GM12878 (cell line): ENCODE measurements at regions of chr6 and their contacts with region 1.

Region 1: GRCh38 chr6:100116411-100117194 is 122.6 kb upstream of the MCHR2 start:
- DNase-seq: no peak
- ATAC-seq: peak; percentile 91
- H3K4me3 ChIP-seq: no peak overlapping the region
- H3K27ac ChIP-seq: no peak overlapping the region
- H3K4me1 ChIP-seq: no peaks in the 10 kb centered on the region
- H3K27me3 ChIP-seq: no peaks in the 10 kb centered on the region
- CTCF ChIP-seq: peak; percentile 59 to 73 (median 63)
- EP300 ChIP-seq: no peak
- POLR2A ChIP-seq: no peak
- RAD21 ChIP-seq: peak; percentile 86

Region 2: GRCh38 chr6:100105138-100105753 is 11.4 kb before region 1 on chr6:
- CTCF ChIA-PET with region 1: interaction called, 24 read pairs
- POLR2A ChIA-PET with region 1: no interaction called
- RAD21 ChIA-PET with region 1: interaction called, 13 read pairs
- SMC1A ChIA-PET with region 1: interaction called, 10 read pairs
- in situ Hi-C with region 1: no loop called
- intact Hi-C with region 1: no loop called
- DNase-seq: no peak
- ATAC-seq: peak; percentile 61
- H3K4me3 ChIP-seq: no peak overlapping the region
- H3K27ac ChIP-seq: no peak overlapping the region
- H3K4me1 ChIP-seq: no peaks in the 10 kb centered on the region
- H3K27me3 ChIP-seq: no peaks in the 10 kb centered on the region; a peak in 1 of 4 replicates
- CTCF ChIP-seq: no peak
- EP300 ChIP-seq: peak in 1 of 2 experiments; percentile 23; a peak in 1 of 4 replicates
- POLR2A ChIP-seq: no peak
- RAD21 ChIP-seq: no peak

Region 3: GRCh38 chr6:100176311-100176950 is 59.8 kb after region 1 on chr6:
- CTCF ChIA-PET with region 1: interaction called, 10 read pairs
- POLR2A ChIA-PET with region 1: no interaction called
- RAD21 ChIA-PET with region 1: no interaction called
- SMC1A ChIA-PET with region 1: interaction called, 12 read pairs
- in situ Hi-C with region 1: no loop called
- intact Hi-C with region 1: no loop called
- DNase-seq: no peak
- ATAC-seq: peak; percentile 49
- H3K4me3 ChIP-seq: no peak overlapping the region
- H3K27ac ChIP-seq: no peak overlapping the region
- H3K4me1 ChIP-seq: no peaks in the 10 kb centered on the region
- H3K27me3 ChIP-seq: no peaks in the 10 kb centered on the region
- CTCF ChIP-seq: peak in 2 of 3 experiments; percentile 23 to 29; a peak in 1 of 6 replicates
- EP300 ChIP-seq: no peak
- POLR2A ChIP-seq: no peak
- RAD21 ChIP-seq: peak; percentile 29; the same call in 1 of the 2 replicates

Region 4: GRCh38 chr6:100460650-100461204 is 344.1 kb after region 1 on chr6:
- CTCF ChIA-PET with region 1: interaction called, 10 read pairs
- POLR2A ChIA-PET with region 1: no interaction called
- RAD21 ChIA-PET with region 1: interaction called, 4 read pairs
- SMC1A ChIA-PET with region 1: interaction called, 7 read pairs
- in situ Hi-C with region 1: no loop called
- intact Hi-C with region 1: no loop called
- DNase-seq: no peak
- ATAC-seq: peak; percentile 35; the same call in 2 of the 3 replicates
- H3K4me3 ChIP-seq: no peak overlapping the region
- H3K27ac ChIP-seq: no peak overlapping the region
- H3K4me1 ChIP-seq: no peaks in the 10 kb centered on the region
- H3K27me3 ChIP-seq: peaks cover 26 to 61% of the 10 kb centered on the region in 2 experiments
- CTCF ChIP-seq: peak; percentile 17 to 39 (median 25); a peak in 5 of 6 replicates
- EP300 ChIP-seq: no peak
- POLR2A ChIP-seq: no peak
- RAD21 ChIP-seq: 0 out of 2 replicates have a peak, but pooled peaks have one; percentile 12

Region 5: GRCh38 chr6:100479179-100480035 is 362.8 kb after region 1 on chr6:
- CTCF ChIA-PET with region 1: interaction called, 72 read pairs
- POLR2A ChIA-PET with region 1: no interaction called
- RAD21 ChIA-PET with region 1: interaction called, 22 read pairs
- SMC1A ChIA-PET with region 1: interaction called, 38 read pairs
- in situ Hi-C with region 1: loop called (anchors 5 kb)
- intact Hi-C with region 1: loop called (anchors 1 kb)
- DNase-seq: peak; percentile 34
- ATAC-seq: peak; percentile 73
- H3K4me3 ChIP-seq: no peak overlapping the region
- H3K27ac ChIP-seq: no peak overlapping the region
- H3K4me1 ChIP-seq: peaks cover 7% of the 10 kb centered on the region
- H3K27me3 ChIP-seq: no peaks in the 10 kb centered on the region
- CTCF ChIP-seq: peak; percentile 63 to 80 (median 76)
- EP300 ChIP-seq: no peak
- POLR2A ChIP-seq: no peak
- RAD21 ChIP-seq: peak; percentile 95

Region 6: GRCh38 chr6:100573167-100573566 is 456.6 kb after region 1 on chr6:
- CTCF ChIA-PET with region 1: interaction called, 3 read pairs
- POLR2A ChIA-PET with region 1: no interaction called
- RAD21 ChIA-PET with region 1: interaction called, 3 read pairs
- SMC1A ChIA-PET with region 1: interaction called, 3 read pairs
- in situ Hi-C with region 1: no loop called
- intact Hi-C with region 1: loop called (anchors 5 kb)
- DNase-seq: no peak
- ATAC-seq: peak; percentile 37; the same call in 1 of the 3 replicates
- H3K4me3 ChIP-seq: no peak overlapping the region
- H3K27ac ChIP-seq: no peak overlapping the region
- H3K4me1 ChIP-seq: no peaks in the 10 kb centered on the region
- H3K27me3 ChIP-seq: no peaks in the 10 kb centered on the region
- CTCF ChIP-seq: peak in 2 of 3 experiments; percentile 10 to 19; a peak in 2 of 6 replicates
- EP300 ChIP-seq: no peak
- POLR2A ChIP-seq: no peak
- RAD21 ChIP-seq: no peak

Region 7: DNA sequence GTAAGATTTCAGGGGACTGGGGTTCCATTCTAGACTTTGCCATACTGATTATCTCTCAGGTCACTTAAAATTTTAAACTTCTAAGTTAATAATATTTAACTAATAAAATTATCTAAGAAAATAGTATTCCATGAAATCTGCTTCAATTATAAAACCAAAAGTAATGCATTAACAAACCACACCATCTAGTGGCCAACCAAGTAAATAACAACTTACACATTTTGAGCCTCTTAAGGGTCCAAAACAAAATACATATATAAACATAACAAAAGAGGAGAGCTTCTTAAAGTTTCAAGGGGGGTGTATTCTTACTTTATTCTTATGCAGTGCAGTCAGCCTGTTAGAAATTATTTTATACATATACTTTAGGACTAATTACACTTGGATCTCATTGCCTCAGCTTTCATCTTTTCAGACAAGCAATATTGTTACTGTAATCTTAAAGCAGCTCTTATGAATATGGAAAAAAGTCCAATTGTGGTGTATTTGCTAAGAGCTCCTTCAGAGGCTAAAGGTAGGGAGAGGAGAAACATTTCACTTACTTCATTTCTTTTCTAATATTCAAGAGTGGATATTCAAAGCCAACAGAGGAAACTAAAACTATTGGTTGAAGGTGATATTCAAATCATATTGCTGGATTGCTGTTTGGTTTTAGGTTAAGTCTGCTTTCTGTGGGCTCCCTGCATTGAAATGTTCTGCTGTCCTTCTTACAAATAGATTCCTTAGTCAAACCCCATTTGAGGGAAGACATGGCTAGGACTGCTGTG is 547.9 kb after region 1 on chr6:
- CTCF ChIA-PET with region 1: interaction called, 20 read pairs
- POLR2A ChIA-PET with region 1: no interaction called
- RAD21 ChIA-PET with region 1: interaction called, 15 read pairs
- SMC1A ChIA-PET with region 1: interaction called, 21 read pairs
- in situ Hi-C with region 1: loop called (anchors 10 kb)
- intact Hi-C with region 1: no loop called
- DNase-seq: no peak
- ATAC-seq: peak; percentile 65
- H3K4me3 ChIP-seq: no peak overlapping the region
- H3K27ac ChIP-seq: peak overlapping the region; percentile 26; the same call in 1 of the 2 replicates
- H3K4me1 ChIP-seq: peaks cover 11% of the 10 kb centered on the region
- H3K27me3 ChIP-seq: no peaks in the 10 kb centered on the region
- CTCF ChIP-seq: peak; percentile 48 to 62 (median 50); a peak in 5 of 6 replicates
- EP300 ChIP-seq: no peak
- POLR2A ChIP-seq: no peak
- RAD21 ChIP-seq: peak; percentile 48